ENCODE measurements at regions of chr9 and their contacts with region 1.

Region 1: DNA sequence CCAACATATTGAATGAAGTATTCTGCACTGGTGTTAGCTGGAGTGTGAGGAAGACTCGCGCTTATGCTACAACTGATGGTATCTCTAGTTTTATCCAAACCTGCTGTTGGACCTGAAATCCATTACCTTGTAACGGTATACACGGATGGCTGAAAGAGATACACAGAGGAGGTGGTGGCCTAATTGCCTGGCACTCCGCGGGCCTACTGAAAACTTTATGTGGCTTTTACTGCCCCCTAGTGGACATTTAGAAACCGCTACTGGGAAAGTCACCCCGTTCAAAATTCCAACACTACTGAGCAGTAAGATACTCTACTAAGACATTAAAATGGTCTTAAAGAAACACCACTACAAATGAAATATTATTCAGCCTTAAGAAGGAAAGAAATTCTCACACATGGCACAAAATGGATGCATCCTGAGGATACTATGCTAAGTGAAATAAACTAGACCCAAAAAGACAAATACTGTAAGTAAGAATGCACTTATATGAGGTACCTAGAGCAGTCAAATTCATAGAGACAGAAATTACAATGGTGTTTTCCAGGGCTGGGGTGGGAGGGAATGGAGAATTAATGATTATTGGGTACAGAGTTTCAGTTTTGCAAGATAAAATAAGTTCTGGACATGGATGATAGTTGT is 100.4 kb downstream of the TTLL11 start:
- DNase-seq: peak; percentile 58 to 76
- ATAC-seq: peak; percentile 88 to 90
- H3K4me3 ChIP-seq: no peak overlapping the region
- H3K27ac ChIP-seq: peak overlapping the region in 1 of 4 donors; percentile 30
- H3K4me1 ChIP-seq: peaks cover 30 to 32% of the 10 kb centered on the region in 2 donors
- H3K27me3 ChIP-seq: no peaks in the 10 kb centered on the region
- CTCF ChIP-seq: peak; percentile 83 to 90 (median 86)
- POLR2A ChIP-seq: no peak

Region 2: GRCh38 chr9:121369595-121370265 is 623.0 kb before region 1 on chr9 and contains the start of gene STOM:
- in situ Hi-C with region 1: no loop called
- intact Hi-C with region 1: loop called (anchors 10 kb)
- DNase-seq: peak; percentile 89 to 92
- ATAC-seq: peak; percentile 68 to 72
- H3K4me3 ChIP-seq: peak within 1 kb of the TSS; percentile 60 to 85 (median 73)
- H3K27ac ChIP-seq: peak within 1 kb of the TSS; percentile 94 to 99 (median 96)
- H3K4me1 ChIP-seq: peaks cover 69 to 78% of the 10 kb centered on the region in 2 donors
- H3K27me3 ChIP-seq: no peaks in the 10 kb centered on the region
- CTCF ChIP-seq: peak in 1 of 5 experiments; percentile 27
- POLR2A ChIP-seq: peak; percentile 99 to 100
- total RNA-seq, gene STOM: 60.0 to 89.5 (median 76.3) TPM

Region 3: DNA sequence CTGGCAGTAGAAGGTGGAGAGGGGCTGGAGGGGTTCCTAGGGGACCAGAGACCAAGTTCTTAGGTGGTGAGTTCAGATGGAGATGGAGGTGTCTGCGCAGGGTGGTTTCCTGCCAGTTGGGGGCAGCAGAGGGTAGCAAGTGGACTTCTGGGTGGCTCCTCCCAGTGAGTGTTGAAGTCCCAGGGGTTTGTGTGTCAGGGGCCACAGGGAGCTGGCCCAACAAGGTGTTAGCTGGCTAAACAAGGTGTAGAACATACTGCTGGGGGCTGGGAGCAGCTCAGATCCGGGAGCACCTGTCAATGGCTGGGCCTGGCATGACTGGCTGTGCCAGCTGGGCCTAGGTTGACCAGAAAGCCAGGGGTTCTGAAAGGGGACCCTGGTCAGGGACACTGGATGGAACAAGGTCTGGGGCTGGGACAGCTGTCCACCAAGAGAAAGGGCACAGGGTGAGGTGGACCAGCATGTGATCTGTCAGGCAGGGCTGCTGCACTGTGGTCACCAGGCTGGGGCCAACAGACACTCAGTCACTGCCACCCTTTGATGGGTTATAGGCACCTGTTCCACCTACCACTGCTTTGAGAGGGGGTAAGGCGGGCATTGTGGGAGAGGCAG is 305.7 kb before region 1 on chr9:
- in situ Hi-C with region 1: loop called in 3 of 4 experiments (anchors 5 to 25 kb)
- intact Hi-C with region 1: loop called (anchors 2 kb)
- DNase-seq: peak; percentile 57 to 80
- ATAC-seq: peak; percentile 77 to 86
- H3K4me3 ChIP-seq: no peak overlapping the region
- H3K27ac ChIP-seq: peak overlapping the region; percentile 65 to 69 (median 67)
- H3K4me1 ChIP-seq: peaks cover 20 to 23% of the 10 kb centered on the region in 2 donors
- H3K27me3 ChIP-seq: no peaks in the 10 kb centered on the region
- CTCF ChIP-seq: peak; percentile 80 to 90 (median 87)
- POLR2A ChIP-seq: no peak

Region 4: DNA sequence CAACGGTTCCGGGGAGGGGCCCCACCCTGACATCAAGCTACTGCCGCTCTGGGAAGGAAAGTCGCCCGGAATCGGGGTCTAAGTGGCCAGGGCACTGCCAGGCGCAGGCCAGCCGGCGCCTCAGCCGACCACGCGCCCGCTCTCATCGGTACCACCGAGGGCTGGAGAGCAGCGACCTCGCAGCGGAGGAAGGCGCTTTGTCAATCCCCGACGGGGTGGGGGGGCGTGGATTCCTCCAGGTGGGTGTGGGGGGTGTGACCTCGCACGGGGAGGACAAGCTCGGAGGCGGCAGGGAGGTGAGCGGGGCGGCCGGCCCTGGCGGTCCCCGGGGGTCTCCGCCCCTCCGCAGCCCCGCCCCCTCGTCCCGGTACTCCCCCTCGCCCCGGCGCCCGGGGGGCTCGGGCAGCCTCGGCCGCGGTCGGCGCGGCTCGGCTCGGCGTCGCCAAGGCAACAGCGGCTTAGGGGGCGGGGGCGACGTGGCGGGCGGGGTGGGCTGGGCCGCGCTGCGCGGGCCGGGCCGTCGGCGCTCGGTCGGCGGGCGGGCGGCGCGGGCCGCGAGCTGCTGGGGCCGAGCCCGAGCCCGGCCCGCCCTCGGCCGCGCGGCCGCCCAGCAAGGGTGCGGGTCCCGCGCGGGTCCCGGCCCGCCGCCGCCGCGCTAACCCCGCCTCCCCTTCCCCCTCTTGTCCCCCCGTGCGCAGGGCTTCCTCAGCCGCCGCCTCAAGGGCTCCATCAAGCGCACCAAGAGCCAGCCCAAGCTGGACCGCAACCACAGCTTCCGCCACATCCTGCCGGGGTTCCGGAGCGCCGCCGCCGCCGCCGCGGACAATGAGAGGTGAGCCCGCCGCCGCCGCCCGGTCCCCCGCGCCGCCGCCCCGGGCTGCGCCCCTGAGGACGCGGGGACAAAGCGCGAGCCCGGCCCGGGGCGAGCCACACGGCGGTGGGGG is 293.8 kb before region 1 on chr9:
- in situ Hi-C with region 1: loop called in 3 of 4 experiments (anchors 5 to 25 kb)
- intact Hi-C with region 1: loop called (anchors 1 kb)
- DNase-seq: no peak
- ATAC-seq: peak in 1 of 2 donors; percentile 21
- H3K4me3 ChIP-seq: peak overlapping the region; percentile 39 to 48 (median 46)
- H3K27ac ChIP-seq: peak overlapping the region; percentile 77 to 88 (median 78)
- H3K4me1 ChIP-seq: peaks cover 26 to 42% of the 10 kb centered on the region in 2 donors
- H3K27me3 ChIP-seq: no peaks in the 10 kb centered on the region
- CTCF ChIP-seq: no peak
- POLR2A ChIP-seq: no peak

Region 5: GRCh38 chr9:121770415-121771273 is 222.0 kb before region 1 on chr9:
- in situ Hi-C with region 1: no loop called
- intact Hi-C with region 1: loop called (anchors 10 kb)
- DNase-seq: no peak
- ATAC-seq: no peak
- H3K4me3 ChIP-seq: no peak overlapping the region
- H3K27ac ChIP-seq: peak overlapping the region; percentile 80 to 88 (median 85)
- H3K4me1 ChIP-seq: peaks cover 31 to 34% of the 10 kb centered on the region in 2 donors
- H3K27me3 ChIP-seq: no peaks in the 10 kb centered on the region
- CTCF ChIP-seq: no peak
- POLR2A ChIP-seq: no peak

Region 6: DNA sequence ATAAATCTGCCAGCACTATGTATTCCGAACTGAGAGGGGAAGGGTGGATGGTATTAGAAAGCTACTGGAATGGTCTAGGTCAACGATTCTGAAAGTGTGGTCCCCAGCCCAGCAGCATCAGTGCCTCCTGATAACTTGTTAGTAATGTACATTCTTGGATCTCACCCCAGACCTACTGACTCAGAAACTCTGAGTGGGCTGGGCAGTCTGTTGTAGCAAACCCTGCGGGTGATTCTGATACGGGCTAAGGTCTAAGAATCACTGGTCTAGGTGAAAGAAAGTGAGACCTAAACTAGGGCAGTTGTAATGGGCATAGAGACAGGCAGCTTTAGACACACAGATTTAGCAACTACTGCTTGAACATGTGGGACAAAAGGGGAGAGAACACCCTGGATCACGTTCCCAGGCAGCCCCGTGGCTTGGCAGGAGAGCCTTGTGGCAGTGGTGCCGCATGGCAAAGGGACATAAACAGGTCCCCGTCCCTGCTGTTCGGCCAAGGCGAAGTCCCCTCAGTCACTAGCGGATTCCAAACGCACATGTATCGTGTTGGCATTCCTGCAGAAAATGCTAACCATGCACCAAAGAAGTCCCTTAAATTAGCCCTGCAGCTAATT is 115.9 kb before region 1 on chr9:
- in situ Hi-C with region 1: no loop called
- intact Hi-C with region 1: loop called (anchors 5 kb)
- DNase-seq: peak; percentile 85 to 90
- ATAC-seq: peak; percentile 97 to 98
- H3K4me3 ChIP-seq: no peak overlapping the region
- H3K27ac ChIP-seq: peak overlapping the region; percentile 42 to 78 (median 70)
- H3K4me1 ChIP-seq: peaks cover 13 to 14% of the 10 kb centered on the region in 2 donors
- H3K27me3 ChIP-seq: no peaks in the 10 kb centered on the region
- CTCF ChIP-seq: no peak
- POLR2A ChIP-seq: no peak

Region 7: GRCh38 chr9:121976751-121977150 is 15.9 kb before region 1 on chr9:
- in situ Hi-C with region 1: no loop called
- intact Hi-C with region 1: no loop called
- DNase-seq: no peak
- ATAC-seq: no peak
- H3K4me3 ChIP-seq: no peak overlapping the region
- H3K27ac ChIP-seq: peak overlapping the region in 2 of 4 donors; percentile 24 to 62
- H3K4me1 ChIP-seq: peaks cover 10 to 11% of the 10 kb centered on the region in 2 donors
- H3K27me3 ChIP-seq: no peaks in the 10 kb centered on the region
- CTCF ChIP-seq: no peak
- POLR2A ChIP-seq: no peak

Region 8: DNA sequence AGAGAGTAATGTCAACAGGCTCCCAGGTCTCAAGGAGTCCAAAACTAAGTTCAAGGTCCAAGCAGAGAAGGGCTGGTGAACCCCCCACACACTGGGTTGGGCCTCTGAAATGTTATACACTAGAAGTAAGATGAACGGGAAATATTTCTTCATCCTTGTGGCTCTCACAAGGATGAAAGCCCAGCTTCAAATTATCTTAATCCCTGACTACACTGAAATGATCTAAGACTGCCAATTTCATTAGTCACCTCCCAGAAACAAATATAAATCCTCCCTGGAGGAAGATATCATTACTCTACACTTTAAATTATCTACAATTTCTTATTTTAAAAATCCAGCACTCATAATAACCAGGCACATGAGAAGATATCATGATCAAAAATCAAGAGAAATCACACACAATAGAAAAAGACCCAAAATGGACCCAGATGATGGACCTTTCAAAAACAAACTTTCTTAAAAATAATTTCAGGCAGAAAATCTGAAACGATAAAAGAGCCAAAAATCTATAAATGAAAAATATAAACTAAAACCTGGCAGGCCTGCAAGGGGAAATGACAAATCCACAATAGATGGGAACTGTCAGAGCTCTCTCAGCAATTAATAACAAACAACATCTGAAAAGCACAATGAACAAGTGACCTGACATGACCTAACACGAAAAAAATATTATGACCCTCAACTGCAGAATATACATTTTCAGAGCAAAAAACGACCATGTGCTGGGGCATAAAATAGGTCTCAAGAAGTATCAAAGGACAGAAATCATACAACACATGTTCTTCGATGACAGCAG is 1158.2 kb after region 1 on chr9:
- in situ Hi-C with region 1: no loop called
- intact Hi-C with region 1: no loop called
- DNase-seq: no peak
- ATAC-seq: no peak
- H3K4me3 ChIP-seq: no peak overlapping the region
- H3K27ac ChIP-seq: no peak overlapping the region
- H3K4me1 ChIP-seq: no peaks in the 10 kb centered on the region
- H3K27me3 ChIP-seq: no peaks in the 10 kb centered on the region
- CTCF ChIP-seq: no peak
- POLR2A ChIP-seq: no peak